Calu3 (cell line): ENCODE measurements at regions of chr18 and their contacts with region 1.

Region 1: DNA sequence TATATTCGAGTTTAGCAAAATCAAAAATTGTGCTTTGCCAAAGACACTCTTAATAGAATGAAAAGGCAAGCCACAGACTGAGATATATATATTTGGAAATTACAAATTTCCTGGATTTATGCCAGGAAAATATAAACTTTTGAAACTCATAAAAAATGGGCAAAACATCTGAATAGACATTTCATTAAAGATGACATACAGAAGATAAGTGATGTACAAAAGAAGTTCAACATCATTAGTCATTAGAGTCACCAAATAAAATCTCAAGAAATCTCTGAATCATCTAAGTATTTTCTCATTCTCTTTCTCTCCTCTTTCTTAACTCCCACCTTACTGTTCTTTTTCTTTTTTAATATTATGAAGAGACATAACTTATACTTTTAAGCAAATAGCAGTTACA is 921.1 kb downstream of the DSC3 start:
- DNase-seq: no peak
- H3K4me3 Mint-ChIP-seq: no peak overlapping the region
- H3K27ac Mint-ChIP-seq: no peak overlapping the region
- H3K4me1 Mint-ChIP-seq: no peaks in the 10 kb centered on the region
- H3K27me3 Mint-ChIP-seq: no peaks in the 10 kb centered on the region
- CTCF ChIP-seq: no peak

Region 2: DNA sequence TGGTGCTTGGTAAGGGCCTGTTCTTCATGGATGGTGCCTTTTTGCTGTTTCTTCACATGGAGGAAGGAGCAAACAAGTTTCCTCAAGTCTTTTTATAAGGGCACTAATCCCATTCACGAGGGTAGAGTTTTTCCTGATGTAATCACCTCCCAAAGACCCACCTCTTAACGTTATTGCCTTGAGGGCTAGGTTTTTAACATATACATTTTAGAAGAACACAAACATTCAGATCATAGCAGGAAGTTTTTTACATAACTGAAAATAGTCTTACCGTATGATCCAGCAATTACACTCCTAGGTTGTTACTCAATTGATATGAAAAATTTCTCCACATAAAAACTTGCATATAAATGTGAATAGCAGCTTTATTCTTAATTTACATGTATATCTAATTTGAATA is 55.1 kb before region 1 on chr18:
- CTCF ChIA-PET with region 1: no interaction called
- intact Hi-C with region 1: loop called (anchors 10 kb)
- DNase-seq: no peak
- H3K4me3 Mint-ChIP-seq: no peak overlapping the region
- H3K27ac Mint-ChIP-seq: no peak overlapping the region
- H3K4me1 Mint-ChIP-seq: no peaks in the 10 kb centered on the region
- H3K27me3 Mint-ChIP-seq: no peaks in the 10 kb centered on the region
- CTCF ChIP-seq: no peak